ENCODE measurements at regions of chr2 and their contacts with region 1.

Region 1: GRCh38 chr2:37672104-37672869 is 845 bp upstream of the CDC42EP3 start:
- DNase-seq: peak; percentile 42 to 84 (median 70)
- ATAC-seq: peak; percentile 47
- H3K4me3 ChIP-seq: peak overlapping the region; percentile 83 to 99
- H3K4me3 Mint-ChIP-seq: peak overlapping the region; percentile 93
- H3K27ac ChIP-seq: peak overlapping the region; percentile 56 to 72
- H3K27ac Mint-ChIP-seq: peak overlapping the region; percentile 90
- H3K4me1 ChIP-seq: peaks cover 29% of the 10 kb centered on the region
- H3K4me1 Mint-ChIP-seq: peaks cover 39% of the 10 kb centered on the region
- H3K27me3 ChIP-seq: no peaks in the 10 kb centered on the region
- H3K27me3 Mint-ChIP-seq: no peaks in the 10 kb centered on the region
- CTCF ChIP-seq: no peak

Region 2: DNA sequence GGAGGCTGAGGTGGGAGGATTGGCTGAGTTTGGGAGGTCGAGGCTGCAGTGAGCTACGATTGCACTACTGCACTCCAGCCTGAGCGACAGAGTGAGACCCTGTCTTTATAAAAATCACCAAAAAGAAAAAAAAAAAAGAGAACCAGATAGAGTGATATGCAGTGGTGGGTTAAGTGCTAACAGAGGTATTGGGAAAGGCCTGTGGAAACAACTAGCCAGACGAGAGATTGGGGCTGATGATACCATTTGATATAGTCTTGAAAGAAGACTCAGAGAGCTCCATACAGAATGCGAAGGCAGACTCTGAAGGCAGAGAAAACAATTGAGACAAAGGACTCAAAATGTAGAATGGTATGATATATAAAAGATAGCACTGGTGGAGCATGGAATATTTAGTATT is 135.0 kb before region 1 on chr2:
- CTCF ChIA-PET with region 1: interaction called, 3 read pairs
- POLR2A ChIA-PET with region 1: no interaction called
- intact Hi-C with region 1: loop called in 1 of 2 experiments (anchors 5 kb)
- DNase-seq: no peak
- ATAC-seq: no peak
- H3K4me3 ChIP-seq: no peak overlapping the region
- H3K4me3 Mint-ChIP-seq: no peak overlapping the region
- H3K27ac ChIP-seq: no peak overlapping the region
- H3K27ac Mint-ChIP-seq: no peak overlapping the region
- H3K4me1 ChIP-seq: no peaks in the 10 kb centered on the region
- H3K4me1 Mint-ChIP-seq: peaks cover 3% of the 10 kb centered on the region
- H3K27me3 ChIP-seq: no peaks in the 10 kb centered on the region
- H3K27me3 Mint-ChIP-seq: no peaks in the 10 kb centered on the region
- CTCF ChIP-seq: no peak

Region 3: DNA sequence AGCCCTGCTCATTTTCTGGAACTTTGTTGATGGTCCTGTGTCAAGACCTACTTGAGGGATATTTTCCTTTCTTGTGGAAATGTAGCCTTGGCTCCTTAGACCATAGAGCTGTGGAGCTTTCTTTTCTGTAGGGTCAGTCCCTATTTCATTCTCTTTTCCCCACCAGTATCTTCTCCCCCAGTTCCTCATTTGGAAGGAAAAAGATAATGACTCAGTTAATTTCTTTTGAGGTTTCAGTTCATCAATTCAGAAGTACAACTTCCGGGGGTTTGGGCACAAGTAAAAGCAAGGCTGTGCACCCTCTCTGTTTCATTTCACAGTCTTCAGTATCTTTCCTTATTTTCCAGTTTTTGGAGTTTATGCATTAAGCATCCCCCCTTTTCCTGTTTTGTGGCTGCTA is 71.6 kb before region 1 on chr2:
- CTCF ChIA-PET with region 1: interaction called, 4 read pairs
- POLR2A ChIA-PET with region 1: interaction called, 42 read pairs
- intact Hi-C with region 1: loop called (anchors 2 kb)
- DNase-seq: peak in 1 of 9 experiments; percentile 46
- ATAC-seq: no peak
- H3K4me3 ChIP-seq: peak overlapping the region; percentile 42 to 66
- H3K4me3 Mint-ChIP-seq: peak overlapping the region; percentile 90
- H3K27ac ChIP-seq: peak overlapping the region; percentile 65 to 84
- H3K27ac Mint-ChIP-seq: peak overlapping the region; percentile 99
- H3K4me1 ChIP-seq: peaks cover 44% of the 10 kb centered on the region
- H3K4me1 Mint-ChIP-seq: peaks cover 54% of the 10 kb centered on the region
- H3K27me3 ChIP-seq: no peaks in the 10 kb centered on the region
- H3K27me3 Mint-ChIP-seq: no peaks in the 10 kb centered on the region
- CTCF ChIP-seq: no peak

Region 4: DNA sequence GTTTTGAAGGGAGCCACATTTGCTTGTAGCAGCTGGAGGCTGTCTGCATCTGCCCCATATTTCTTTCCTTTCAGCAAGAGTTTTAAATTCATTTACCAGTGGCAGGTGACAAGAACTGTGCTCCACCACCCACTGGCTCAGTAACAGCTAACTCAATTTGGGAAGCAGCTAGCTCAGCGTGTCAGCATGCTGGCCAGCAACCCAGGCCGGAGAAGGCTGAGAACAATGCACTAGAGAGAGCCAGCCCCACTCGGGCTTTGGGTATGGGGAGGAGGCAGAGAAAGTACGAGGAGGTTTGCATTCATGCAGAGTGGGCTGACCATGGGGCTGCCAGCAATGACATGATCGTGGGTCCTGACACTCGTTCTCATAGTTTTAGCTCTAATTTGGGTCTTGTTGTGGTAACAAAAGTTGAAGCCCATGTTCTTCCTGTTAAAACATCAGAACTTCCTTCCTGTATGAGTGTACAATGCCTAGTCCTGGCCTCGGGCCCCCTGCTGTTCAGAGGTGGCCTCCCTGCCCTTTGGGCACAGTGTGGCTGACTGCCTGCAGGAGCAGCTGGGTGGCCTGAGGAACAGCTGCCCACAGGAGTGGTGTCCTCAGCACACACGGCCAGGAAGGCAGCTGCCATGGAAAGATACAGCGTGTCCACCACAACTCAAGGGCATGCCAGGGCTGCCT is 23.8 kb before region 1 on chr2:
- CTCF ChIA-PET with region 1: interaction called, 10 read pairs
- POLR2A ChIA-PET with region 1: interaction called, 13 read pairs
- intact Hi-C with region 1: loop called in 1 of 2 experiments (anchors 2 kb)
- DNase-seq: peak in 8 of 9 experiments; percentile 8 to 80 (median 57)
- ATAC-seq: peak; percentile 71
- H3K4me3 ChIP-seq: peak overlapping the region in 1 of 2 experiments; percentile 24
- H3K4me3 Mint-ChIP-seq: peak overlapping the region; percentile 65
- H3K27ac ChIP-seq: peak overlapping the region in 1 of 2 experiments; percentile 68
- H3K27ac Mint-ChIP-seq: peak overlapping the region; percentile 92
- H3K4me1 ChIP-seq: peaks cover 84% of the 10 kb centered on the region
- H3K4me1 Mint-ChIP-seq: peaks cover 92% of the 10 kb centered on the region
- H3K27me3 ChIP-seq: no peaks in the 10 kb centered on the region
- H3K27me3 Mint-ChIP-seq: no peaks in the 10 kb centered on the region
- CTCF ChIP-seq: peak; percentile 24

Region 5: DNA sequence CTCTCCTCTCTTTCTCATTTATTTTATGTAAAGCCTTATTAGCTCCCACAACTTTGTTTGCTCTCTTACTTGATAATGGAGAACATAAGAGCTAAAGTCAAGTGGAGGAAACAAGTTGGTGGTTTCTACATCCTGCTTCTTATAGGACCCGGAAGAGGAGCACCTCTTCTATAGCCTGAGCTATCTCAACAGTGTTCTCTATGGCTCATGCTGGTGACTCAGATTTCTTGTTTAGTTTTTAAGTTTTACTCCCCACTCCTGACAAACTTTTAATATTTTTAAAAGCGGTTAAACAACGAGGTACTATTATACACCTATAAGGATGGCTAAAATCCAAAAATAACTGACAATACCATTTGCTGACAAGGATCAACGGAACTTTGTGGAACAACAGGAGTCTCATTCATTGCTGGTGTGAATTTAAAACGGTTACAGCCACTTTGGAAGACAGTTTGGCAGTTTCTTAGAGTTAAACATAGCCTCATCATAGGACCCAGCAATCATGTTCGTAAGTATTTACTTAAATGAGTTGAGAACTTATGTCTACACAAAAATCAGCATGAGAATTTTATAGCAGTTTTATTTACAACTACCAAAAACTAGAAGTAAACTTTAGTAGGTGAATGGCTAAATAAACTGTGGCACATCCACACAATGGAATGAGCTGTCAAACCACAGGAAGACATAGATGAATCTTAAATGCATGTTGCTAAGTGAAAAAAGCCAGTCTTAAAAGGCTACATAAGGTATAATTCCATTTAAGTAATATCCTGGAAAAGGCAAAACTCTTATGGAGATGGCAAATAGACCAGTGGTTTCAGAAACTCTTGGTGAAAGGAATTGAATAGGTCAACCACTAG is 11.9 kb after region 1 on chr2:
- CTCF ChIA-PET with region 1: interaction called, 3 read pairs
- POLR2A ChIA-PET with region 1: interaction called, 9 read pairs
- intact Hi-C with region 1: loop called in 1 of 2 experiments (anchors 1 kb)
- DNase-seq: peak in 2 of 9 experiments; percentile 56 to 73
- ATAC-seq: peak; percentile 100
- H3K4me3 ChIP-seq: no peak overlapping the region
- H3K4me3 Mint-ChIP-seq: peak overlapping the region; percentile 40
- H3K27ac ChIP-seq: peak overlapping the region in 1 of 2 experiments; percentile 61
- H3K27ac Mint-ChIP-seq: peak overlapping the region; percentile 89
- H3K4me1 ChIP-seq: peaks cover 24% of the 10 kb centered on the region
- H3K4me1 Mint-ChIP-seq: peaks cover 32% of the 10 kb centered on the region
- H3K27me3 ChIP-seq: no peaks in the 10 kb centered on the region
- H3K27me3 Mint-ChIP-seq: no peaks in the 10 kb centered on the region
- CTCF ChIP-seq: no peak

Region 6: DNA sequence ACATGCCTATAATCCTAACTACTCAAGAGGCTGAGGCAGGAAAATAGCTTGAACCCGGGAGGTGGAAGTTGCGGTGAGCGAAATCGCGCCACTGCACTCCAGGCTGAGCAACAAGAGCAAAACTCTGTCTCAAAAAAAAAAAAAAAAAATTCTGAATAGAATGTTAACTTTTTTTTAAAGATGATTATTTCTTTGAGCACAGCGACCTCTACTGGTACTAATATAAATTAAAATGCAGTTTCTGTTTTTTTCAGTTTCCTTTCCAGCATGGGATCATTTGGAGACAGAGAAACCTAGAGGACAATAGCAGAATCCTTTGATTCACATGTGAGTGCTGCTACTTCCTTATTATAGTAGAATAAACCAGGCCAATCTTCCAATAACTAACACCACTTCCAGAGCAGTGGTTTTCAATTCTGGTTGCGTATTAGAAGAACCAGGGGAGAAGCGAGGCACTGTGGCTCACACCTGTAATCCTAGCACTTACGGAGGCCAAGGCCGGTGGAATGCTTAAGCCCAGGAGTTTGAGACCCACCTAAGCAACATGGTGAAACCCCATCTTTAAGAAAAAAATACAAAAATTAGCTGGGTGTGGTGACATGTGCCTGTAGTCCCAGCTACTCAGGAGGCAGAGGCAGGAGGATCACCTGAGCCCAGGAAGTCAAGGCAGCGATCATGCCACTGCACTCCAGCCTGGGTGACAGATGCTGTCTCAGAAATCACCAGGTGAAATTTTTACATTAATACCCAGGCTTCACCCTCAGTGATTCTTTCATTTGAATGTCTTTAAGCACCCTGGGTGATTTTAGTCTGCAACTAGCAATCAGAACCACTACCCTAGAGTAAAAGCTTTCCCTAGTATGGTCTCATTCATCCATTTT is 1068.8 kb after region 1 on chr2:
- CTCF ChIA-PET with region 1: no interaction called
- POLR2A ChIA-PET with region 1: no interaction called
- intact Hi-C with region 1: no loop called
- DNase-seq: peak in 3 of 9 experiments; percentile 48 to 73 (median 62)
- ATAC-seq: peak; percentile 22
- H3K4me3 ChIP-seq: no peak overlapping the region
- H3K4me3 Mint-ChIP-seq: no peak overlapping the region
- H3K27ac ChIP-seq: peak overlapping the region in 1 of 2 experiments; percentile 21
- H3K27ac Mint-ChIP-seq: peak overlapping the region; percentile 69
- H3K4me1 ChIP-seq: peaks cover 19% of the 10 kb centered on the region
- H3K4me1 Mint-ChIP-seq: peaks cover 43% of the 10 kb centered on the region
- H3K27me3 ChIP-seq: no peaks in the 10 kb centered on the region
- H3K27me3 Mint-ChIP-seq: no peaks in the 10 kb centered on the region
- CTCF ChIP-seq: peak; percentile 72